ENCODE measurements at regions of chr15 and their contacts with region 1.

Region 1: GRCh38 chr15:98518823-98519561 is 129.3 kb upstream of the IGF1R start:
- DNase-seq: peak in 4 of 5 donors; percentile 38 to 50 (median 42)
- H3K4me3 ChIP-seq: no peak overlapping the region
- H3K4me3 Mint-ChIP-seq: no peak overlapping the region
- H3K27ac ChIP-seq: no peak overlapping the region
- H3K27ac Mint-ChIP-seq: peak overlapping the region in 1 of 7 donors; percentile 23
- H3K4me1 ChIP-seq: no peaks in the 10 kb centered on the region
- H3K4me1 Mint-ChIP-seq: peaks cover 0 to 4% (median 0%) of the 10 kb centered on the region in 4 donors
- H3K27me3 ChIP-seq: no peaks in the 10 kb centered on the region
- H3K27me3 Mint-ChIP-seq: peaks cover 0 to 4% of the 10 kb centered on the region in 2 donors

Region 2: GRCh38 chr15:99059010-99059981 is 540.3 kb after region 1 on chr15:
- CTCF ChIA-PET with region 1: interaction called, 3 read pairs
- POLR2A ChIA-PET with region 1: no interaction called
- intact Hi-C with region 1: loop called (anchors 1 kb)
- DNase-seq: peak in 4 of 5 donors; percentile 20 to 38 (median 28)
- H3K4me3 ChIP-seq: peak overlapping the region; percentile 6 to 32
- H3K4me3 Mint-ChIP-seq: peak overlapping the region; percentile 49 to 77 (median 68)
- H3K27ac ChIP-seq: no peak overlapping the region
- H3K27ac Mint-ChIP-seq: no peak overlapping the region
- H3K4me1 ChIP-seq: peaks cover 8% of the 10 kb centered on the region
- H3K4me1 Mint-ChIP-seq: peaks cover 0 to 10% (median 4%) of the 10 kb centered on the region in 4 donors
- H3K27me3 ChIP-seq: peaks cover 6% of the 10 kb centered on the region
- H3K27me3 Mint-ChIP-seq: peaks cover 18 to 44% of the 10 kb centered on the region in 2 donors